Pancreas (tissue), 10 donors: ENCODE measurements at regions of chr1 and their contacts with region 1.

Region 1: DNA sequence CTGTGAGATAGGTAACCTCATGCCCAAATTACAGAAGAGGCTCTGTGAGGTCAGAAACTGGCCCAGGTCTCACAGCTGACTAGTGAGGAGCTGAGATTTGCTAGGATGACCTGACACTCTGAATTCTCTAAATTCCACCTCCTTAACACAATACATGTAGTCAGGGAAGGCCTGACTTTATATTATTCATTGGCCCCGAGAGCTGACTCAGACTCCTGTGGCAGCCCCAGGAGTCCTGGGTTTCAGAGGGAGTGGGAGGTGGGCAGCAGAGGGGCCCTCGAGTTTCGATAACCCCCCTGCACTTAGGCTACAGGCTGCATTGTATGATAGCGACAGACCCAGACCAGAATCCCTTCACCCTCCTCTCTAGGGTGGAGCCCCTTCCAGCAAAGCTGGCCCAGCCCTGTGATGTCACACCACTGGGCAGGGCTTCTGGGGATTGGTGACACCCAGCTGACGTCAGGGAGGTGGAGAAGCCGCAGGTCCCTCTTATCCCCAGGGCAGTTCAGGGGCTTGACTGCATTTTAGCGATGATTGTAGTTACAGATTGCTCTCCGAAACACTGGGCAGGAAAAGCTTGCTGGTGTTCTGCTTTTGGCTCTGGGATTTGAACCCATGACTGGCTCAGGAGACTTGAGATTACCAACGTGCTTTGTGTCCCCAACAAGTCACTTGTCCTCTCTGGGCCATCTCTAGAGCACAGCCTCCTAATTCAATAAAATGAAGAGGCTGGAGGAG is 17.0 kb upstream of the GPR37L1 start:
- DNase-seq: peak in 4 of 6 donors; percentile 48 to 70 (median 61)
- ATAC-seq: peak in 1 of 4 donors; percentile 4
- H3K4me3 ChIP-seq: no peak overlapping the region
- H3K27ac ChIP-seq: peak overlapping the region; percentile 95 to 99 (median 98)
- H3K4me1 ChIP-seq: peaks cover 31 to 42% (median 36%) of the 10 kb centered on the region in 3 donors
- H3K27me3 ChIP-seq: no peaks in the 10 kb centered on the region
- CTCF ChIP-seq: no peak

Region 2: DNA sequence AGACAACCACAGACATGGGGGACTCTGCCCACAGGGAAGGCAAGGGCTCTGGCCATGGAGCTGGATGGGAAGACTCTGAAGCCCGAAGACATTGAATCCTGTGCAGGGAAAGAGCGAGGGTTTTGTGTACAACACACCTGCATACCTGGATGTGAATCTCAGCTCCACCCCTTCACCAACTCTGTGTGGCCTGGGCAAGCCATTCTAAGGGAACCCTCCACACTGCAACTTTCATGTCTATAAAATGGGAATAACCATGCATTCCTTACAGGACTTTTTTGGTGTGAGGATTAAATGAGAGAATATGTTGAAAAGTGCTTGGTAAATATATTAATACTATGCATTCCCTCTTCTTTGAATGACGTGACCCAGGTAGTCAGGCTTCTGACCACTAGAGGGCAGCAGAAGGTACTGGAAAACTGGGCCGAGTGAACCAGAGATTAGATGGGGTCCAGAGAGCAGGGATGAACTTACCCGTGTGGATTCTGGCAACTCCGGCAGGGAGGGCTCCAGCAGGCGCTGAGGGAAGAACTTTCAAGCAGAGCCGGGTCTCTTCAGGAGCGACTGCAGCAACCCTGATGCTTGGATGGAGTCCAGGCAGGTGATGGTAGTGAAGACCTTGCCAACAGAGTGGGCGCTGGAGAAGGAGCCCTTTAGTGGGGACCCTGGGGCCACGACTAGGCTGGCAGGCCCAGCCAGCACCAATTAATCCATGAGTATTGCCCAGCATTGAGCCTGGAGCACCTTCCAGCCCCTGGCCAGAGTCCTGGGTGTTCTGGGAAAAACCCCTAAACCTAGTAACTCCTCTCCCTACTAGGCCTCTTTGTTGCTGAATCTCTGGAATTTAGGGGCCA is 96.2 kb before region 1 on chr1:
- intact Hi-C with region 1: loop called in 2 of 3 experiments (anchors 5 to 10 kb)
- DNase-seq: peak; percentile 74 to 89 (median 80)
- ATAC-seq: peak; percentile 61 to 72 (median 65)
- H3K4me3 ChIP-seq: peak overlapping the region in 2 of 4 donors; percentile 17 to 83
- H3K27ac ChIP-seq: peak overlapping the region; percentile 80 to 97 (median 88)
- H3K4me1 ChIP-seq: peaks cover 7 to 24% (median 12%) of the 10 kb centered on the region in 3 donors
- H3K27me3 ChIP-seq: no peaks in the 10 kb centered on the region
- CTCF ChIP-seq: peak; percentile 83 to 91 (median 86)

Region 3: DNA sequence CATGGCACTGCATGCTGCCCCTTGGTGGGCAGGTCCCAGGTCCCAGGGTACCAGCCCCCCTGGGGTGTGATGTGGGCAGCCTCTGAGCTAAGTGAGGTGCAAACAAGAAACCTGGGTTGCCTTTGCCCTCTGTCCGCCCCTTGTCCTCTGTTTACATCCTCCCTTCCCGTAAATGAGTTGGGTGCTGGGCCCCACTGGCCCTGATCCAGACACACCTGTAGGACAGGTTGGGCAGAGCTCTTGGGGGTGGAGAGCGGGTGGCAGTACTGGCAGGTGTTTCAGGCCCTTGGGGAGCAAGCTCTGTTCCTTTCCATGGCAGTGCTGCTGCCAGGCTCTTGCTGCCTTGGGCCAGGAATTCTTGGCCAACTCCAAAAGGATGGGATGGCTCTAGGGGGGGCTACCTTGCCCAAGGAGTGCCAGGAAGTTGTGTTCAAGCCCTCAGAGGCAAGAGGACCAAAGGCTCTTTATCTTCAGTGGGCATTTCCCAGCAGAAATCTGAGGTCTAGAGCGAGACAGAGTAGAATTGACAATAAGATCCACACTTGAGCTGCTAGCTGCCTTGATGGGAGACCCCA is 59.4 kb before region 1 on chr1:
- intact Hi-C with region 1: loop called in 1 of 3 experiments (anchors 5 kb)
- DNase-seq: peak; percentile 92 to 98 (median 94)
- ATAC-seq: peak; percentile 86 to 94 (median 90)
- H3K4me3 ChIP-seq: no peak overlapping the region
- H3K27ac ChIP-seq: peak overlapping the region; percentile 65 to 91 (median 78)
- H3K4me1 ChIP-seq: peaks cover 33 to 62% (median 47%) of the 10 kb centered on the region in 3 donors
- H3K27me3 ChIP-seq: no peaks in the 10 kb centered on the region
- CTCF ChIP-seq: no peak